ENCODE measurements at regions of chr9 and their contacts with region 1.

Region 1: GRCh38 chr9:109012876-109013678 is at the start of gene CTNNAL1:
- DNase-seq: peak; percentile 79
- H3K4me3 Mint-ChIP-seq: peak within 1 kb of the TSS; percentile 92
- H3K27ac Mint-ChIP-seq: peak within 1 kb of the TSS; percentile 86
- H3K4me1 Mint-ChIP-seq: peaks cover 32% of the 10 kb centered on the region
- H3K27me3 Mint-ChIP-seq: peaks cover 8% of the 10 kb centered on the region
- total RNA-seq, gene CTNNAL1: 19.8 and 21.6 TPM in 2 replicates

Region 2: DNA sequence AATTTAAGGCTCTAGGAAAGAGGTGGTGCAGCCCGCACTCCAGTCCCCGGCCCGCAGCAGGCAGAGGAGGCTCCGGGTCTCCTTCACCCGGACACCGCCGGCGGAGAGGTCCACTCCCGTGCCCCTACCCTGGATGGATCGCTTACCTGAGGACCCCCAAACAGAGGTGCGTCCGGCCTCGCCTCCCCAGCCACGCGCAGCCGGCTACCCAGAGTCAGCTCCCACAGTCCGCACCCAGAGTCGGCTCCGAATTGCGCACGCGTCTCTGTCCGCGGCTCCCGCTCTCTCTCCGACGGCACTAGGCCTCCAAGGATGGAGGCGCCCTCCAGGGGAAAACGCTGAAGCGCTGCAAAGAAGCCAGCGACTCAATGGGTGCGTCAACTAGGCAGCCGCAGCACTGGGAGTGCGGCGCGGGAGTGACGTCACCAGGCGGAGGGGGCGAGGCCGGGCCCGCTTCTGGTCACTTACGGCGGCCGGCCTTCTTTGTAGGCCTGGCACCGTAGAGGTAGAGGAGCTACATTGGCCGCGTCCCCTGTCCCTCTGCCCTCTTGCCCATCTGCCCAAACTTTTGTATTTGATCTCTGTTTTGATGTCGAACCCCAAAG is 79.3 kb before region 1 on chr9 and contains the start of gene ELP1:
- intact Hi-C with region 1: loop called (anchors 1 kb)
- DNase-seq: peak; percentile 89
- H3K4me3 Mint-ChIP-seq: peak within 1 kb of the TSS; percentile 98
- H3K27ac Mint-ChIP-seq: peak within 1 kb of the TSS; percentile 94
- H3K4me1 Mint-ChIP-seq: peaks cover 26% of the 10 kb centered on the region
- H3K27me3 Mint-ChIP-seq: no peaks in the 10 kb centered on the region
- total RNA-seq, gene ELP1: 31.7 and 32.7 TPM in 2 replicates

Region 3: GRCh38 chr9:109092051-109092580 is 79.0 kb after region 1 on chr9:
- intact Hi-C with region 1: loop called (anchors 2 kb)
- DNase-seq: no peak
- H3K4me3 Mint-ChIP-seq: no peak overlapping the region
- H3K27ac Mint-ChIP-seq: peak overlapping the region; percentile 77
- H3K4me1 Mint-ChIP-seq: peaks cover 49% of the 10 kb centered on the region
- H3K27me3 Mint-ChIP-seq: no peaks in the 10 kb centered on the region

Region 4: GRCh38 chr9:109110326-109111021 is 97.4 kb after region 1 on chr9:
- intact Hi-C with region 1: loop called (anchors 2 kb)
- DNase-seq: no peak
- H3K4me3 Mint-ChIP-seq: peak overlapping the region; percentile 54
- H3K27ac Mint-ChIP-seq: peak overlapping the region; percentile 79
- H3K4me1 Mint-ChIP-seq: peaks cover 62% of the 10 kb centered on the region
- H3K27me3 Mint-ChIP-seq: no peaks in the 10 kb centered on the region

Region 5: GRCh38 chr9:109182940-109183798 is 170.1 kb after region 1 on chr9:
- intact Hi-C with region 1: loop called (anchors 1 kb)
- DNase-seq: peak; percentile 11
- H3K4me3 Mint-ChIP-seq: no peak overlapping the region
- H3K27ac Mint-ChIP-seq: no peak overlapping the region
- H3K4me1 Mint-ChIP-seq: peaks cover 9% of the 10 kb centered on the region
- H3K27me3 Mint-ChIP-seq: peaks cover 15% of the 10 kb centered on the region

Region 6: GRCh38 chr9:110152704-110153374 is 1139.8 kb after region 1 on chr9:
- intact Hi-C with region 1: loop called (anchors 10 kb)
- DNase-seq: no peak
- H3K4me3 Mint-ChIP-seq: peak overlapping the region; percentile 37
- H3K27ac Mint-ChIP-seq: peak overlapping the region; percentile 77
- H3K4me1 Mint-ChIP-seq: peaks cover 95% of the 10 kb centered on the region
- H3K27me3 Mint-ChIP-seq: no peaks in the 10 kb centered on the region

Measured in activated T-helper 2 cell treated with anti-CD3 and anti-CD28 coated beads, Interferon-gamma antibody, Interleukin-2, Interleukin-4, amounts not matched to agents 10 μg/mL and 5 μg/mL and 100 μg/mL, durations not matched to agents 14 hours and 24 hours and 36 hours (primary cell).